Activated T-helper 1 cell treated with anti-CD3 and anti-CD28 coated beads, Interleukin-12 subunit alpha, Interleukin-12 subunit beta, Interleukin-2, Interleukin-4 antibody, amounts not matched to agents 30 ng/mL and 10 ng/mL and 1 ng/mL, durations not matched to agents 14 hours and 24 hours and 36 hours (primary cell): ENCODE measurements at regions of chr1 and their contacts with region 1.

Region 1: DNA sequence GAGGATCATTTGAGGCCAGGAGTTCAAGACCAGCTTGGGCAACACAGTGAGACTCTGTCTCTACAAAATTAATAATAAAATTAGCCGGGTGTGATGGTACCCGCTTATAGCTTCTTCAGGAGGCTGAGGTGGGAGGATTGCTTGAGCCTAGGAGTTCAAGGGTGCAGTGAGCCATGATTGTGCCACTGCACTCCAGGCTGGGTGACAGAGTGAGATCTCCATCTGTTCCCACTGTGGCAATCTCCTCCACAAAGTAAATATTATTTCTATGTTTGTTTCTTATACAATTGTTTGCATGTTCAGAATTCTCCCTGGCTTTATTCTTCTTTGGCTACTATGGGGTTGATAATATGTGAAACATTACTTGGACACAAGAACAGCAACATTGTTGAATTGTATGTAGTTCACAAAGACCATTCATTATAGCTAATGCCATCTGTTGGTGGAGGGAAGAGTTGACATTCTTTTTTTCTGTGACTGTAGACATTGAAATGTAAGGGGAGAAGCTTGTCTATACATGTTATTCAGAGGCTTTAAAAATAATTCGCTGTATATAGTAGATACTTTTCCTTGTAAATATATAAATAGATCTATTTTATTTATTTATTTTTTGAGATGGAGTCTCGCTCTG is 47.8 kb upstream of the SRSF10 start:
- DNase-seq: no peak
- H3K4me3 Mint-ChIP-seq: no peak overlapping the region
- H3K27ac Mint-ChIP-seq: no peak overlapping the region
- H3K4me1 Mint-ChIP-seq: no peaks in the 10 kb centered on the region
- H3K27me3 Mint-ChIP-seq: no peaks in the 10 kb centered on the region

Region 2: DNA sequence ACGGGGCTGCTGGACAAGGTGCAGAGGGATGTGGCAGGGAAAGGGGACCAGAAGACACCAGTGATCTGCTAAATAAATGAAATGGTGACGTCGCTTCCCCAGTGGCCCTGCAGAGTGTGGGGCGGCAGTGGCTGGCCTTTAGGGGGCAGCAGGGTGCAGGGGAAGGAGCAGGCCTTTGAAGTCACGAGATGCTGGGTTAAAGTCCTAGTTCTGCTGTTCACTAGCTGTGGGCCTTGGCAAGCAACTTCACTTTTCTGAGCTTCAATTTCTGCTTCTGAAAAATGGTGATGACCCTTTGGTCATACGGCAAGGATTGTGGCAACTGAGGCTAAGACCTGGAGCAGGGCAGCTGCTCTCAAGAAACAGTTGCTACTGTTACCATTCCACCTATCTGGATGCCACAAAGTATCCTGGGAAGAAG is 218.2 kb before region 1 on chr1:
- intact Hi-C with region 1: loop called (anchors 1 kb)
- DNase-seq: peak; percentile 70
- H3K4me3 Mint-ChIP-seq: no peak overlapping the region
- H3K27ac Mint-ChIP-seq: no peak overlapping the region
- H3K4me1 Mint-ChIP-seq: peaks cover 19% of the 10 kb centered on the region
- H3K27me3 Mint-ChIP-seq: no peaks in the 10 kb centered on the region

Region 3: GRCh38 chr1:23951571-23952095 is 76.3 kb before region 1 on chr1:
- intact Hi-C with region 1: loop called (anchors 1 kb)
- DNase-seq: no peak
- H3K4me3 Mint-ChIP-seq: no peak overlapping the region
- H3K27ac Mint-ChIP-seq: no peak overlapping the region
- H3K4me1 Mint-ChIP-seq: peaks cover 17% of the 10 kb centered on the region
- H3K27me3 Mint-ChIP-seq: peaks cover 7% of the 10 kb centered on the region